ENCODE measurements at regions of chr15 and their contacts with region 1.

Region 1: GRCh38 chr15:68924866-68925560 is 5.3 kb upstream of the SPESP1 start:
- DNase-seq: peak; percentile 88
- H3K4me3 Mint-ChIP-seq: no peak overlapping the region
- H3K27ac Mint-ChIP-seq: no peak overlapping the region
- H3K4me1 Mint-ChIP-seq: no peaks in the 10 kb centered on the region
- H3K27me3 Mint-ChIP-seq: peaks cover 24% of the 10 kb centered on the region

Region 2: GRCh38 chr15:68843425-68844311 is 81.3 kb before region 1 on chr15:
- intact Hi-C with region 1: loop called (anchors 10 kb)
- DNase-seq: peak; percentile 73
- H3K4me3 Mint-ChIP-seq: peak overlapping the region; percentile 79
- H3K27ac Mint-ChIP-seq: no peak overlapping the region
- H3K4me1 Mint-ChIP-seq: peaks cover 7% of the 10 kb centered on the region
- H3K27me3 Mint-ChIP-seq: peaks cover 62% of the 10 kb centered on the region

Measured in activated CD4-positive, alpha-beta T cell treated with anti-CD3 and anti-CD28 coated beads, Interleukin-2, amount 10 ng/mL, durations not matched to agents 24 days and 14 days (primary cell).